BJ (cell line): ENCODE measurements at regions of chr7 and their contacts with region 1.

Region 1: DNA sequence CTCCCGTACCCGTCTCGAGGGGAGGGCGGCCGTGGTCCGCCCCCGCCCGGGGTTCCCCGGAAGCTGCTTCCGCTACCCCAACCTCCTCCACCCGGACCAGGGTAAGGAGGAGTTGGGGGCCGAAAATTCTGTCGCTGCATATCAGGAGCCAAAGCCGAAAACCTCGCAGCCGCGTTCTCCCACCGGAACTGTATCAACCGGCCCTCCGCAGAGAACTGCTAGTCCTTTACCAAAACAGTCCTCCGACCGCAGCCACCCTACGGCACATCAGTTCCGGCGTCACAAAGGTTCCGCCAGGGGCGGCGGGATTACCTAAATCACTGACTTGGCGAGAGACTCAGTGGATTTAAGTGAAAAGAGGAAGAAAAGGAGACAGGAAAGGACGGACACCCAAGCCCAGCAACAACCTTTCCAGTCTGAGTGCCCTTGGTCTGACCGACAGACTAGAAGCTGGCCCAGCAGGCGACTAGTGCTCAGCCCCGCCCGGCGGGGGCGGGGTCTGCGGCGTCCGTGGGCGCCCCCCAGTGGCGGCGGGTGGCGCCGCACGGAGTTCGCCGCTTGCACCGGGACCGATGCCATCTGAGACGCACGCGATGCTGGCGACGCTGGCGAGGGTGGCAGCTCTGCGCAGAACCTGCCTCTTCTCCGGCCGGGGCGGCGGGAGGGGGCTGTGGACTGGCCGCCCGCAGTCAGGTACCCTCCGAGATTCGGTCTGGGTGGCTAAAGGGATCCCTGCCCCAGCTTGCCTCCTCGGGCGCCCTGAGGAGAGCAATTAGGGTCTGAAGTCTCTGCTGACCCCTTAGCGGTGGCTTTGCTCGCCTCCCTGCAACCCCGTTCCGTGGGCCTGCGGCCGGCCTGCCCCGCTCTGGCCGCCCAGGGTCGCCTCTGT is at the starts of genes MPLKIP and SUGCT:
- DNase-seq: peak; percentile 23
- H3K4me3 ChIP-seq: peak within 1 kb of the TSS; percentile 79
- H3K27me3 ChIP-seq: no peaks in the 10 kb centered on the region
- CTCF ChIP-seq: peak; percentile 60
- polyA plus RNA-seq, gene MPLKIP: 13.1 and 22.5 TPM in 2 replicates
- polyA plus RNA-seq, gene SUGCT: 10.6 and 16.5 TPM in 2 replicates

Region 2: DNA sequence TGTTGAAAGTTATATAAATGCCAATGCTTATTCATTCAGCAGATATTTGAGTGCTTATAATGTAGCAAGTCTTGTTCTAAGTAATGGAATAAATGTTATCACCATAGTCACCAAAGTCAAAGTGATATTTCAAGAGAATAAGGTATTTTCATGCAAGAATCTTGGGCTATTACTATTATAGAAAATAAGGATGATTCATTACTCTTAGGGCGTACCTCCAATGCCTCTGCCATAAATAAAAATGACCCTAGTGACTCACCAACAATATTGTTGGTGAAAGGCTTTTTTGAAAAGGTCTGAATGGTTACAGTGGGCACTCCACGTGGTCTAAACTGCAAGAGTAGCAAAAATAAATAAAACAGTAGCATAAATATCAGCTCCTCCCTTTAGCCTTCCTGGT is 442.9 kb before region 1 on chr7:
- CTCF ChIA-PET with region 1: no interaction called
- POLR2A ChIA-PET with region 1: no interaction called
- DNase-seq: peak; percentile 39
- H3K4me3 ChIP-seq: no peak overlapping the region
- H3K27me3 ChIP-seq: no peaks in the 10 kb centered on the region
- CTCF ChIP-seq: no peak

Region 3: GRCh38 chr7:40120020-40120419 is 14.7 kb before region 1 on chr7:
- CTCF ChIA-PET with region 1: interaction called, 12 read pairs
- POLR2A ChIA-PET with region 1: no interaction called
- DNase-seq: no peak
- H3K4me3 ChIP-seq: no peak overlapping the region
- H3K27me3 ChIP-seq: no peaks in the 10 kb centered on the region
- CTCF ChIP-seq: no peak